GM18951 (cell line): ENCODE measurements at regions of chr19 and their contacts with region 1.

Region 1: DNA sequence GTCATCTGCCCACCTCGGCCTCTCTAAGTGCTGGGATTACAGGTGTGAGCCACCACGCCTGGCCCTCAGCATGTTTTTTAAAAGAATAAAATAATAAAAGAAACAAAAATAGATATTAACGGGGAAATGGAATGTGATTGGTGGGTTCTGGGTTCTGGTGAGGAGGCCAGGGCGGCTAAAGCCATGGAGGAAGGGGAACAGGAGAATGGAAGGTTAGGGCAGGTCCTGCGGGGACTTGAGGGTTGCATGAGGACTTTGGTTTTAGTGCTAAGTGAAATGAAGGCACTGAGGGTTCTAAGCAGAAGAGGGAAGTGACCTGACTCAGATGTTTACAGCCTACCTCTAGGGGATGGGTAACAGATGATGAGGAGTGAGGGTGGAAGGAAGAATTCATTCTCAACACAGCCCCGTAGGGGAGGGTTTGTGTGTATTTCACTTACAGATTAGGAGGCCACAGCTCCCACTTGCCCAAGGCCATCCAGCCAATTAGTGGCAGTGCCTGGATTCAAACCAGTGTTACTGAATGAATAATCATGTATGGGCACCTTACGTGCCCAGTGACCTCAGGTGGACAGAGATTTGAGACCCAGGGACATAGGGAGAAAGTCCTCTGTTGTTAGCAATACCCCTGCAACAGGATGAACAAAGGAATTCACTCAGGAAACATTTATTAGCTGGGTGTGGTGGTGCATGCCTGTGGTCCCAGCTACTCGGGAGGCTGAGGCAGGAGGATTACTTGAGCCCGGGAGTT is 6.7 kb upstream of the MRPL4 start:
- POLR2A ChIP-seq: no peak

Region 2: DNA sequence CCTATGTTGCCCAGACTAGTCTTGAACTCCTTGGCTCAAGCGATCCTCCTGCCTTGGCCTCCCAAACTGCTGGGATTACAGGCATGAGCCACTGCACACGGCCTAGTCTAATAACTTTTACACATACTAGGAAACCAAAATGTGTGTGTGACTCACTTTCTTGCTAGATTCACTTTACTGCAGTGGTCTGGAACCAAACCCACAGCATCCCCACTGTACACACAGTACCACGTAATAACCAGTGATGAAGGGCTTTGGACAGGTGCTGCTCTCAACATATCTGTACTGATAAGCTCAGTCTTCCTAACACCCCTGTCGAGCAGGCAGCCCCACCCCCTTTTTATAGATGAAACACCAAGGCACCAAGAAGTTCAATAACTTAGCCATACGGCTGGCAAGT is 55.7 kb before region 1 on chr19:
- in situ Hi-C with region 1: loop called (anchors 10 kb)
- POLR2A ChIP-seq: no peak